CD8-positive, alpha-beta T cell (primary cell): ENCODE measurements at regions of chr9 and their contacts with region 1.

Region 1: GRCh38 chr9:8053530-8053929 is 254.0 kb upstream of the DMAC1 start:
- DNase-seq: no peak
- ATAC-seq: no peak
- H3K4me3 ChIP-seq: no peak overlapping the region
- H3K4me3 Mint-ChIP-seq: no peak overlapping the region
- H3K27ac ChIP-seq: no peak overlapping the region
- H3K27ac Mint-ChIP-seq: no peak overlapping the region
- H3K4me1 ChIP-seq: no peaks in the 10 kb centered on the region
- H3K4me1 Mint-ChIP-seq: peaks cover 3% of the 10 kb centered on the region
- H3K27me3 ChIP-seq: no peaks in the 10 kb centered on the region
- H3K27me3 Mint-ChIP-seq: no peaks in the 10 kb centered on the region
- CTCF ChIP-seq: no peak

Region 2: GRCh38 chr9:7859701-7860334 is 193.7 kb before region 1 on chr9:
- CTCF ChIA-PET with region 1: no interaction called
- POLR2A ChIA-PET with region 1: no interaction called
- intact Hi-C with region 1: loop called in 1 of 2 experiments (anchors 10 kb)
- DNase-seq: no peak
- ATAC-seq: no peak
- H3K4me3 ChIP-seq: no peak overlapping the region
- H3K4me3 Mint-ChIP-seq: no peak overlapping the region
- H3K27ac ChIP-seq: no peak overlapping the region
- H3K27ac Mint-ChIP-seq: no peak overlapping the region
- H3K4me1 ChIP-seq: no peaks in the 10 kb centered on the region
- H3K4me1 Mint-ChIP-seq: peaks cover 4% of the 10 kb centered on the region
- H3K27me3 ChIP-seq: no peaks in the 10 kb centered on the region
- H3K27me3 Mint-ChIP-seq: no peaks in the 10 kb centered on the region
- CTCF ChIP-seq: no peak

Region 3: GRCh38 chr9:9186086-9186485 is 1132.6 kb after region 1 on chr9:
- CTCF ChIA-PET with region 1: no interaction called
- POLR2A ChIA-PET with region 1: no interaction called
- intact Hi-C with region 1: no loop called
- DNase-seq: no peak
- ATAC-seq: no peak
- H3K4me3 ChIP-seq: no peak overlapping the region
- H3K4me3 Mint-ChIP-seq: no peak overlapping the region
- H3K27ac ChIP-seq: no peak overlapping the region
- H3K27ac Mint-ChIP-seq: no peak overlapping the region
- H3K4me1 ChIP-seq: no peaks in the 10 kb centered on the region
- H3K4me1 Mint-ChIP-seq: no peaks in the 10 kb centered on the region
- H3K27me3 ChIP-seq: no peaks in the 10 kb centered on the region
- H3K27me3 Mint-ChIP-seq: no peaks in the 10 kb centered on the region
- CTCF ChIP-seq: no peak